Mammary epithelial cell (primary cell): ENCODE measurements at regions of chr11 and their contacts with region 1.

Region 1: DNA sequence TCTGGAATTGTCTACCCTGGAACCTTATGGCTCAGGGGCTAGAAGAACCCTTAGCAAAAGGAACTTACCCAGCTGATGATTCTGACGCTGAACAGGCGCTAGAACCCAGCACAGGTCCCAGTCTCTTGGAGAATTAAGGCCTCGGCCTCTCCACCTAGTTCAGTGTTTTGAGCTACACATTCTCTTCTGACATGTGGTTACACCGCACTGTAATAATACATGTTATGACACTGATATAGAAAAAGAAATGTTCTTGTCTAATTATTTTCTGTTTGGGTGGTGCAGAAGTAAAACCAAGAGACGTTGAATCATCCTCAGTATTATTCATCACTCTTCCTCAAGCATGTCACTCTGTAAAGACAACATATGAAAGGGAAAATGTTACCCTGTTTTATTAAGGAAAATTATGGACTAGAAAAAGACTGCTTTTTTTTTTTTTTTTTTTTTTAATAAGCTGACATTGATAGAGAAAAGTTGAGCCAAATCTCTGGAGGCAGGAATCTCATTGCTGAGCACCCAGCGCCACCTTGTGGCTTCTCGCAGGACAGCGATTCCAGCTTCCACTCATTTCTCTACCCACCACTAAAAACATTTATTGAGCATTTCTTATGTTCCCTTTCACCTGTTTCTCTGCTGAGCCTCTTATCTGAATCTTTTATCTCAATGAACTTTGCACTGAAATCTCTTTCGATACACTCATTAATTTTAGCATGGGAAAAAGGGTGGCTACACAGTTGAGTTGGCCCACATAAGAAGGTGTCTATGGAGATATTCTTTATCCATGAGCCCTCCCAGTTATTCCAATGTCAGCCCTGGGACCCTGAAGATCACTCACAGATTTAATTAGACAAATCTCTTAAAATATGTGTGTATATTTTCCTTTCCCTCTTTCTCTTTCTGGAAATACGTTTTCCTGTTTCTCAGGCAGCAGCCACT is 12.6 kb upstream of the APLNR start:
- DNase-seq: peak; percentile 70
- H3K4me3 ChIP-seq: no peak overlapping the region
- H3K27ac ChIP-seq: no peak overlapping the region
- H3K4me1 ChIP-seq: peaks cover 27% of the 10 kb centered on the region
- H3K27me3 ChIP-seq: no peaks in the 10 kb centered on the region
- CTCF ChIP-seq: peak; percentile 89 to 92

Region 2: GRCh38 chr11:57001674-57002401 is 247.8 kb before region 1 on chr11:
- CTCF ChIA-PET with region 1: no interaction called
- dilution Hi-C with region 1: no loop called
- in situ Hi-C with region 1: no loop called
- intact Hi-C with region 1: loop called (anchors 1 kb)
- DNase-seq: peak; percentile 9
- H3K4me3 ChIP-seq: no peak overlapping the region
- H3K27ac ChIP-seq: no peak overlapping the region
- H3K4me1 ChIP-seq: no peaks in the 10 kb centered on the region
- H3K27me3 ChIP-seq: no peaks in the 10 kb centered on the region
- CTCF ChIP-seq: peak; percentile 41 to 48

Region 3: GRCh38 chr11:57131080-57131790 is 118.4 kb before region 1 on chr11:
- CTCF ChIA-PET with region 1: interaction called, 56 read pairs
- dilution Hi-C with region 1: no loop called
- in situ Hi-C with region 1: loop called (anchors 5 kb)
- intact Hi-C with region 1: loop called (anchors 1 kb)
- DNase-seq: peak; percentile 39
- H3K4me3 ChIP-seq: no peak overlapping the region
- H3K27ac ChIP-seq: no peak overlapping the region
- H3K4me1 ChIP-seq: no peaks in the 10 kb centered on the region
- H3K27me3 ChIP-seq: no peaks in the 10 kb centered on the region
- CTCF ChIP-seq: peak; percentile 78 to 93

Region 4: DNA sequence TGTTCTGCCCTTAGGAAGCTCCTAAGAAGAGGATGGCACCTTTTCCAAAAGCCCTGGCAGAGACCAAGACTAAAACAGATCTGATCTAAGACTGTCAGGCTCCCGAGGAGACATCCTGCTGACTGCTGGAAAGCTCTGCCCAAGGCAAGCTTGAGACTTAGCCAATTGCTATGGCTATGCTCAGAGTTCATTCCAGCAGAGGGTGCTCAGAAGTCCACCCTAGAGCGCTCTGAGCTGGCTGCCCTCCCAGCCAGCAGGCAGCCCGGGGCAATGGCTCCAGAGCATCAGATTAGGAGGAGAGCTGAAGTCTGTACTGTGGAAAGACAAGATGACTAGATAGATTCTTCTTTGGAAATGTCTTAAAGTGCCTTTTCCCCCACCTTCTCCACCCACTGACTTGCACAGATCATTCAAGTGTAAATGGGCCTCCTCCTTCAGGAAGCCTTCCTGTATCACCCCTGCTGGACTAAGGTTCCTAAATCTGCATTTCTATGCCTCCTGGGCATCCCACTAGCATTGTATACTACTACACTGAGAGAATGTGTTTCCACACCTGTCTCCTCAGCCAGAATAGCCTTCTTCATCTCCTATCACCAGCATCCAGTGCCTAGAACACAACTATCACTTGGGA is 44.5 kb before region 1 on chr11:
- CTCF ChIA-PET with region 1: interaction called, 12 read pairs
- dilution Hi-C with region 1: no loop called
- in situ Hi-C with region 1: no loop called
- intact Hi-C with region 1: no loop called
- DNase-seq: peak; percentile 39
- H3K4me3 ChIP-seq: no peak overlapping the region
- H3K27ac ChIP-seq: no peak overlapping the region
- H3K4me1 ChIP-seq: no peaks in the 10 kb centered on the region
- H3K27me3 ChIP-seq: no peaks in the 10 kb centered on the region
- CTCF ChIP-seq: no peak

Region 5: DNA sequence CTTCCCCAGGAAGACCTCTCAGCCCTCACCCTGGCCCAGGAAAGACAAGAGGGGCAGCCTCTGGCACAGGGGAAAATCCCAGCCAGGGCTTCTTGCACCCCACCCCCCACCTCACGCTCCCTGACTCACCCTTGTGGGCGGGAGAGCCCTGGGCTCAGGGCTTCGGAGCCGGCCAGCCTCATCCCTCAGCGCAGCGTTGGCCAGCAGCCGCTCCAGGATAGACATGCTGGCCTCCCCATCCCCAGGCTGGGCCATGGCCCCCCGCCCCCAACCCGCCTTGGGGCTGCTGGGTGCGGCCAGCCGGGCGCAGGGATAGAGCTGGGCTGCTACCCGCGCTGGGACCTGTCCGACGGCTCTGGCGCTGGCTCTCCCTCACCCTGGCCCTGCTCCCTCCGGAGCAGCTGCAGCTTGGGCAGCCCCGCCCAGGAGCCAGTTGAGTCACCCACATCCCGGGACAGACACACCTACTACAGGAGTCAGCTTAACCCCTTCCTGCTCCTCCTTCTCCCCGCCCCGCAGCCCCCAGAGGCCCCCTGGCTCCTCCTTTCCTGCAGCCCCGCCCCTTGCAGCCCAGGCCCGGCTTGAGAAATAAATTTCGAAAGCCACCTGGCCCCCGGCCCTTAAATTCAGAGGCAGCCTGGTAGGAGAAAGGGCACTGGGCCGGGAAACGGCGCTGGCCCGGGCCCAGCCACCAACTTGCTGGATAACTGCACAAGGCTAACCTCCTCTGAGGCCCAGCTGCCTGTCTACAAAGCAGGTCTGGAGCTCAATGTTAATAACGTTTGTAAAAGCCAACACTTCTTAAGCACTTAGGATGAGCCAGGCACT is 61.7 kb after region 1 on chr11:
- CTCF ChIA-PET with region 1: no interaction called
- dilution Hi-C with region 1: no loop called
- in situ Hi-C with region 1: no loop called
- intact Hi-C with region 1: loop called (anchors 1 kb)
- DNase-seq: peak; percentile 96
- H3K4me3 ChIP-seq: peak overlapping the region; percentile 37 to 64 (median 55)
- H3K27ac ChIP-seq: peak overlapping the region; percentile 80
- H3K4me1 ChIP-seq: peaks cover 63% of the 10 kb centered on the region
- H3K27me3 ChIP-seq: no peaks in the 10 kb centered on the region
- CTCF ChIP-seq: no peak